ENCODE measurements at regions of chr2 and their contacts with region 1.

Region 1: DNA sequence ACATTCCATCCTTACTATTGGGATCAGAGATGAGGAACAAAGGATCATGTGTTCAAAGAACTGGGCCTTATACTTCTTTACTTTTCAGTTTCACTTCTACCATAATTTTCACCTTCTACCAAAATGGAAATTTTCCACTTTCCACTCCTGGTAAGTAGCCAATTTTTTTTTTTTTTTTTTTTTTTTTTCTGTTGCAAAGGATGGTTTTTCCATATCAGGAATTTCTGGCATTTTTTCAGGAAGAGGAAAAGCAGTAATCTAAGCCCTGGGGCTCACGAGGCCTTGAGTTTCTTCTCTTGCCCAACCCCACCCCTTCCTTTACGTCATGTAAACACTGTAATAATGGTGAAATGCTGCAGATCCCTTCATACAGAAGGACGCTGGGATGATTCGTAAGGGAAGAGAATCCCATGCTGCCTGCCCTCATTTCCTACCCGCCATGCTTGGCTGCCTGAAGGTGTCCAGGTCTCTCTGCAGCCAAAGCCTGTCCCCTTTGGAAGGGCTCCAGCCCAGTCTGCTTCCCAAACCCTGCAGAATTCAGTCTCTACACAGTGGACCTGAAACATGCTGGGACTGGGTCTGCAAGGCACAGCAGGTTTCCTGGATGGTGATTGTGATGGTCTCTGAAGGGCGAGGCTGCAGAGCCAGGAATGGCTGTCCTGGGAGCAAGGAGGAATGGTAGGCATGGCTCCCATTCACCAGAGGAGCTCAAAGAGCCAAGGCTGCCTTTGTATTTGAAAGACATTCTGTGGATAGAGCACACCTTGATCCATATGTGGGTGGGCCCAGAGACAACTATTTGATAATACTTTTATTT is 57.0 kb downstream of the EFR3B start:
- DNase-seq: no peak
- ATAC-seq: no peak
- H3K4me3 Mint-ChIP-seq: no peak overlapping the region
- H3K27ac Mint-ChIP-seq: no peak overlapping the region
- H3K4me1 Mint-ChIP-seq: peaks cover 18% of the 10 kb centered on the region
- H3K27me3 Mint-ChIP-seq: peaks cover 2% of the 10 kb centered on the region

Region 2: GRCh38 chr2:24559475-24560109 is 539.3 kb before region 1 on chr2:
- CTCF ChIA-PET with region 1: no interaction called
- POLR2A ChIA-PET with region 1: no interaction called
- intact Hi-C with region 1: loop called in 1 of 2 experiments (anchors 10 kb)
- DNase-seq: no peak
- ATAC-seq: no peak
- H3K4me3 Mint-ChIP-seq: no peak overlapping the region
- H3K27ac Mint-ChIP-seq: no peak overlapping the region
- H3K4me1 Mint-ChIP-seq: peaks cover 21% of the 10 kb centered on the region
- H3K27me3 Mint-ChIP-seq: no peaks in the 10 kb centered on the region

Region 3: DNA sequence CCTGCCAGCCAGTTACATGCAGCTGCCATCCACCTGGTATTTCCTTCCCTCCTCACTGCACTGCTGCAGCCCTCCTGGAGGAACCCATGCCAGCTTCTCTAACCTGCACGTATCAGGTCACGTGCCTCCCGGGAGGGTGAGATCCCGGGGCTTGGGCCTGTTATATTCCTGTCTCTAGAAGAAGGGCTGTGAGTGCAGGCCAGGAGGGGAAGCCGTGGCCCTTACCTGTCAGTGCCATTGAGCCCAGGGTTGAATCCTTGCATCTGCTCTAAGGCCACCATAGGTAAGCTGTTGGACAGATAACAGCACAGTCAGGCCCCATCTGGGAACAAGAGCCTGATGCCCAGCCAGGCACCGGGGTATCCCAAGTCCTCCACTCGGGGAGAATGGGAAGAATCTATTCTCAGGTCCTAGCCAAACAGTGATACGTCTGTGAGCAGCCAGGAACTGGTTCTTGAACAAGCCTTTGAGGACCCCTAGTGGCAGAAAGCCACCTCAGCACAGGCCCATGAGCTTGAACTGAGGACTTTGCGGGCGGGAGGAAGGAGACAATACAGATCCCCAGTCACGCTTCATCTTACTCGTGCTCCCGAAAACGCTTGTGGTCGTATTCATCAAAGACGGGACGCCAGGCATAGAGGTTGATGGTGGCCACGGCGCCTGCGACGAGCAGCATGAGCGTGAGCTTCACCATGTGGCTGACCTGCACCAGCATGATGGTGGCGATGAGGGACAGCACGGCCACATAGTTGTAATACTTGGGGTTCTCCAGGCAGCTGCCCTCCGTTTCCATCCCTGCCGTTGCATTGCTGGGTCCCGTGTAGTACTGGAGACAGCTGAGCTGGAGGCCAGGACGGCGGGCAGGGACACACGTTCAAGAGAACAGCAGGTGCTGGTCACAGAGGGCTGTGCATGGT is 271.3 kb before region 1 on chr2:
- CTCF ChIA-PET with region 1: no interaction called
- POLR2A ChIA-PET with region 1: no interaction called
- intact Hi-C with region 1: no loop called
- DNase-seq: peak; percentile 84
- ATAC-seq: peak; percentile 85
- H3K4me3 Mint-ChIP-seq: no peak overlapping the region
- H3K27ac Mint-ChIP-seq: no peak overlapping the region
- H3K4me1 Mint-ChIP-seq: peaks cover 20% of the 10 kb centered on the region
- H3K27me3 Mint-ChIP-seq: no peaks in the 10 kb centered on the region

Region 4: DNA sequence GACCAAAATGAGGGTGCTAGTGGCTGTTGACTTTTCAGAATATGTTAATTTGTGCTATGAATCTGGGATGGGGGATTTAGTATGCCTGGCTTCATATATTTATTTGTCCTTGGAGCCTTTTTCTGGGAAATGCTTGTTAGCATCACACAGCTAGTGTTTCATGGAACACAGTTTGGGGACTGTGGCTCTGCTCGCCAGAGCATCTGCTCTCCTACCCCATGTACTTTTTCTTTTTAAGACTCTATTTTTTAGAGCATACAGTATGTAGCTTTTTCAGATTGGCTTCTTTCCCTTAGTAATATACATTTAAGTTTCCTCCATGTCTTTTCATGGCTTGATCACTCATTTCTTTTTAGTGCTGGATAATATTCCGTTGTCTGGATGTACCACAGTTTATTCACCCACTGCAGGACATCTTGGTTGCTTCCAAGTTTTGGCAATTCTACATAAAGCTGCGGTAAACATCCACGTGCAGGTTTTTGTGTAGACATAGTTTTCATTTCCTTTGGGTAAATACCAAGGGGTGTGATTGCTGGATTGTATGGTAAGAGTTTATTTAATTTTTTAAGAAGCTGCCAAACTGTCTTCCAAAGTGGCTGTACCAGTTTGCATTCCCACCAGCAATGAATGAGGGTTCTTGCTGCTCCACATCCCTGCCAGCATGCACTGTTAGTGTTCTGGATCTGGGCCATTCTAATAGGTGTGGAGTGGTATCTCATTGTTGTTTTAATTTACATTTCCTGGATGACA is 12.9 kb before region 1 on chr2:
- CTCF ChIA-PET with region 1: no interaction called
- POLR2A ChIA-PET with region 1: no interaction called
- intact Hi-C with region 1: no loop called
- DNase-seq: no peak
- ATAC-seq: no peak
- H3K4me3 Mint-ChIP-seq: no peak overlapping the region
- H3K27ac Mint-ChIP-seq: no peak overlapping the region
- H3K4me1 Mint-ChIP-seq: no peaks in the 10 kb centered on the region
- H3K27me3 Mint-ChIP-seq: peaks cover 4% of the 10 kb centered on the region

Region 5: DNA sequence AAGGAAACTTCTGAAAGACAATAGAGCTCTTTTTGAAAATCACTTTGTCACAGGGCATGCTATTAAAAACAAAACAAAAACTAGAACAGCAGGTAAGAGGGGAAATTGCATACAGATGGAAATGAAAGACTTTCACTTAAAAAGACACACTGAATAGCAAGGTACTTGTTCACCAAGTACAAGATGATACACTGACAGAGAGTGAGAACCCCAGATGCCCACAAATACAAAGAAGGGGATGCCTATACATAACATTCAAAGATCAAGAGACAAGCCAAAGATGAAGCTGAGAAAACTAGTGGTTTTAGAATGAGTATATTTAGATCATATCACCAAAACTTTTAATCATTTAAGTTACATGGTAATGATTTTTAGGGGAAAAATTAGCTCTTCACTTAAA is 718.8 kb after region 1 on chr2:
- CTCF ChIA-PET with region 1: no interaction called
- POLR2A ChIA-PET with region 1: no interaction called
- intact Hi-C with region 1: no loop called
- DNase-seq: peak; percentile 43
- ATAC-seq: peak; percentile 96
- H3K4me3 Mint-ChIP-seq: peak overlapping the region; percentile 21
- H3K27ac Mint-ChIP-seq: peak overlapping the region; percentile 56
- H3K4me1 Mint-ChIP-seq: peaks cover 70% of the 10 kb centered on the region
- H3K27me3 Mint-ChIP-seq: no peaks in the 10 kb centered on the region

Measured in activated CD4-positive, alpha-beta T cell treated with anti-CD3 and anti-CD28 coated beads for 36 hours (primary cell).